Psoas muscle (tissue), 8 donors: ENCODE measurements at regions of chr7 and their contacts with region 1.

Region 1: DNA sequence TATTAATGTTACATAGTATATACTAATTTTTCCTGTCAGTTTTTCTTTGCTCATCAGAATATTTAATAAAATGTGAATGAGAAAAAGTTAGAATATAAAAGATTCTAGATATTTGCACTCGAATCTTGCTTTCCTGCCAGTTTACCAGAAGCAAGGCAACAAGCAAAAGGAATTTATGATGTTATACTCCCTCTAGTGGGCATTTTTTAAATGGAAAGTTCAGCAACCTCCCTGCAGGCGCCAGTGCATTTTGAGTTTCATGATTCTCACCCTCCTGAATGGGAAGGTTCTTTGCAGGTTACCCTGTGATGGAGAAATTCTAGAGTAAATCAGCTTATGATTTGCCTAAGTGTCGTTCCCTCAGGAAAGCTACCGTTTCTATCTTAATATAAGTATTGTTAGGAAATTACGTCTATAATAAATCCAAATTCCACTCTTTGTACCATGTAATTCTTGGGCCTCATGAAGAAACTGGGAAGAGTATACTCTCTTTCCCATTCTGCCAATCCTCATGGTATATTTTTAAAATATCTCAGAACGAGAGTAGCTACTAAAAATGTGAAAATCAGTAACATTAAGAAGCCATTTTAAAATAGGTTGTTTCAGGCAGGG is 350.0 kb downstream of the CRPPA start:
- DNase-seq: no peak
- ATAC-seq: peak in 3 of 4 donors; percentile 44 to 67 (median 44)
- H3K4me3 ChIP-seq: peak overlapping the region; percentile 37
- H3K27ac ChIP-seq: no peak overlapping the region
- H3K4me1 ChIP-seq: peaks cover 13% of the 10 kb centered on the region
- H3K27me3 ChIP-seq: no peaks in the 10 kb centered on the region
- CTCF ChIP-seq: peak; percentile 83

Region 2: DNA sequence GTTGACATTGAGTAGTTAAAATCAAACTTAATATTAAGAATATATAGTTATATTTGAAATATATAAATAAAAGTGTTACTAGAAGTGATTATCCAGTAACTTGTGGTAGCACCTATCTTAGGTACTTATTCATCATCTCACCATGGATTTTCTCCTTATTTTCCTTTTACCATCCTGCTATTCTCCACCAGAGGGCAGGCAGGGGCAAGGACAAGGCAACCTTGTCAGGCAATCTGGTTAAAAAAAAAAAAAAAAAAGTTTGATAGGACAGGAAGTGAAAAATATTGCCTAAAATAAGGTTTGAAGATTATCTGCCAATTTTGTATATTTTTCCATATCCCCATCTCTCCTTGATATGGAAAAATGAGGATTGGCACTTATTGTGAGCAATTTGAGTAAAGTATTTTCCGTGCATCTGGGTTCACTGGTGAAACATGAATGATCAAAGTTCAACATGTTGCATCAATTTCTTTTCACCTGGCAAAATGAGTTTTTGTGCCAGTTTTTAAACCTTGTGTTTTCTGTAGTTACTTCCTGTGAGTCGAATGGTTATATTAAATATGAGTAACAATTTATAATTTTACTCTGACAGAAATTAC is 766.3 kb before region 1 on chr7:
- intact Hi-C with region 1: loop called in 1 of 2 experiments (anchors 5 kb)
- DNase-seq: peak in 1 of 2 donors; percentile 31
- ATAC-seq: peak in 1 of 4 donors; percentile 52
- H3K4me3 ChIP-seq: no peak overlapping the region
- H3K27ac ChIP-seq: no peak overlapping the region
- H3K4me1 ChIP-seq: no peaks in the 10 kb centered on the region
- H3K27me3 ChIP-seq: no peaks in the 10 kb centered on the region
- CTCF ChIP-seq: peak; percentile 75

Region 3: GRCh38 chr7:15326044-15326644 is 745.2 kb before region 1 on chr7:
- intact Hi-C with region 1: loop called in 1 of 2 experiments (anchors 5 kb)
- DNase-seq: no peak
- ATAC-seq: no peak
- H3K4me3 ChIP-seq: no peak overlapping the region
- H3K27ac ChIP-seq: no peak overlapping the region
- H3K4me1 ChIP-seq: no peaks in the 10 kb centered on the region
- H3K27me3 ChIP-seq: no peaks in the 10 kb centered on the region
- CTCF ChIP-seq: peak; percentile 56

Region 4: DNA sequence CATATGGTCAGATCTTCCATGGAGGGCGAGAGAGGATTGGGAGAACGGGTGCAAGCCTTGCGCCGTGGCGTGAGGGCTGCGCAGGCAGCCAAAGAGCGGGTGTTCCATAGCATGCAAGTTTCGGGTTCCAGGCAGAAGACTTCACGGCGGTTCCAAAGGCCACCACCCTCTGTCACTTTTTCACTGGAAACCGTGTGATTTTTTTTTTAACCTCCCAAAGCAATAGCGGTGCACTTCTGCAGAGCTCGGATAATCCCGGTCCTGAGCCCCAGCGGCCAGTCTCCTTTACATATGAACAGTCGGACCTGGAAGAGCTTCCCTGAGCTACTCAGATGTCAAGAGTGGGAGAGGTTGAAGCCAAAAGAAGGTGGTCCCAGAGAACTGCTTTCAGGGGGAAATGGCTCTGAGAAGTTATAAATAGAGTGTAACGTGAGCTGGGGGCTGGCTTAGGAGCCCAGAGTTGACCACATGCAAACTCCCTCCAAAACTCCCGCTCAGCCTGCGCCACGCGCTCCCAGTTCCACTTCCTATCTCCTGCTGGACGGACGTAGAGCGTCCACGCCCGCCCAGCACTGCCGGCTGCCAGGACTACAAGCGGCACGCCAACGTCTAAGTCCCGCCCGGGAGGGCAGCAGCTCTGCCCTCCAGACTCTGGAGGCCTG is 384.9 kb before region 1 on chr7 and contains the start of gene MEOX2:
- intact Hi-C with region 1: loop called (anchors 2 to 10 kb)
- DNase-seq: peak; percentile 85 to 91
- ATAC-seq: peak; percentile 60 to 87 (median 84)
- H3K4me3 ChIP-seq: peak within 1 kb of the TSS; percentile 71
- H3K27ac ChIP-seq: peak within 1 kb of the TSS; percentile 76
- H3K4me1 ChIP-seq: no peaks in the 10 kb centered on the region
- H3K27me3 ChIP-seq: peaks cover 0 to 37% (median 12%) of the 10 kb centered on the region in 3 donors
- CTCF ChIP-seq: no peak
- total RNA-seq, gene MEOX2: 3.8 to 6.9 (median 5.3) TPM

Region 5: DNA sequence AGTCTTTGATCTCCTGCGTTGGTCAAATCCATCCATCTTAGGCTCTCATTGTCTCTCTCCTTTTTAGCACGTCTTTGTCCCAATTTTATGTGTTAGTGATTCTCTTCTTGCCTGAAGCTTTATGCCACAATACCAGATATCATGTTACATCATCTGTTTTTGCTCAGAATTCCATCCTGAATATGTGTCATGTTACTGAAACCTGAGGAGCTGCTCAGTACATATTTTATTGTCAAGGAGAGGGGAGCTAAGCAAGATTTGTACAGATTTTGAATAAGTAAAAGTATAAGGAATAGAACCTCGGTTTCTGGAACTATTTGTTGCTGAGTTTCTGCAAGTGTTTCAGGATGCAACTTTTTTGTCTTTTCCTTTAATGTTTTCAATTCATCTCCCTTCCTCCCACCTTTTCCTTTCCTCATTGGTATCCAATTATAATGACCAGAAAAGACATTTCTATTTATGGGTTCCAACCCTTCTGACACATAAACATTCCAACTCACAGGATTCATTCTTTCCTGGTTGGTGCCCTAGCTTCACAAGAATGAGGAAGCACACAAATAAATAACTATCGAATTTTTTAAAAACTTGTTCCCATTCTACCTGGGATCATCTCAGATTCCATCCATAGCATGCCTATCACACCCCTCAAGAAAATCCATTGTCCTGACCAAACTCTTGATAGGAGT is 58.2 kb after region 1 on chr7:
- intact Hi-C with region 1: no loop called
- DNase-seq: no peak
- ATAC-seq: no peak
- H3K4me3 ChIP-seq: no peak overlapping the region
- H3K27ac ChIP-seq: no peak overlapping the region
- H3K4me1 ChIP-seq: no peaks in the 10 kb centered on the region
- H3K27me3 ChIP-seq: no peaks in the 10 kb centered on the region
- CTCF ChIP-seq: no peak

Region 6: GRCh38 chr7:16420649-16421332 is 349.4 kb after region 1 on chr7:
- intact Hi-C with region 1: loop called in 1 of 2 experiments (anchors 10 kb)
- DNase-seq: peak; percentile 85 to 90
- ATAC-seq: peak; percentile 82 to 93 (median 90)
- H3K4me3 ChIP-seq: peak overlapping the region; percentile 88
- H3K27ac ChIP-seq: peak overlapping the region; percentile 96
- H3K4me1 ChIP-seq: peaks cover 12% of the 10 kb centered on the region
- H3K27me3 ChIP-seq: no peaks in the 10 kb centered on the region
- CTCF ChIP-seq: peak; percentile 25